PC-9 (cell line): ENCODE measurements at regions of chr12 and their contacts with region 1.

Region 1: DNA sequence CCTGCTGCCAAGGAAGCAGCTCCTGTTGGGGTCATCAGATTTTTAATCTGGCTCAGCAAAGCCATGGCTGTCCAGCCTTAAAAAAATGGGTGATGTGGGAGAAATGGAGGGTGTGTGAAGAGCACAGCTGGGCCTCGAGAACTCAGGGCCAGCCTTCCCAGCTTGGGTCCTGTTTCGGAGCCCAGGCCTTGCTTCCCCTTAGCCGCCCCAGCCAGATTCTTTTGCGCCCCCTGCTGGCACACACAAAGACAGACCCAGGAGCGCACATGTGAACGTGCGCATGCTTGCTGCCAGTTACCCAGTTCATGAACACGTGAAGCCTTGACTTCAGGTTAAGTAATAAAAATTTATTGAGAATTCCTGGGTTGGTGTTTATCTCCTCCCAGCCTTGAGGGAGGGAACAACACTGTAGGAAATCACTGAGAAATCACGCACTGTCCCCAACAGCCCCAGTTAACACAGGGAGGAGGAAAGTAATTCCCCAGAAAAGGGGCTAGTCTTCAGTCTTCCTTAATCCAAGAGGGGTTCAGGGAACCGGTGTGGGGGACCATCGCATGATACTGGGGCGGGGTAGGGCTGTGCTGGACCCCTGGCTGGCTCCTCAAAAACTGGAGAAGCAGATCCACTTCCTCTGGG is 5.3 kb downstream of the PHB2 start:
- DNase-seq: peak; percentile 88
- H3K4me3 ChIP-seq: peak overlapping the region; percentile 98
- H3K27ac ChIP-seq: peak overlapping the region; percentile 93
- H3K4me1 ChIP-seq: peaks cover 52% of the 10 kb centered on the region
- H3K27me3 ChIP-seq: no peaks in the 10 kb centered on the region
- CTCF ChIP-seq: peak; percentile 99

Region 2: DNA sequence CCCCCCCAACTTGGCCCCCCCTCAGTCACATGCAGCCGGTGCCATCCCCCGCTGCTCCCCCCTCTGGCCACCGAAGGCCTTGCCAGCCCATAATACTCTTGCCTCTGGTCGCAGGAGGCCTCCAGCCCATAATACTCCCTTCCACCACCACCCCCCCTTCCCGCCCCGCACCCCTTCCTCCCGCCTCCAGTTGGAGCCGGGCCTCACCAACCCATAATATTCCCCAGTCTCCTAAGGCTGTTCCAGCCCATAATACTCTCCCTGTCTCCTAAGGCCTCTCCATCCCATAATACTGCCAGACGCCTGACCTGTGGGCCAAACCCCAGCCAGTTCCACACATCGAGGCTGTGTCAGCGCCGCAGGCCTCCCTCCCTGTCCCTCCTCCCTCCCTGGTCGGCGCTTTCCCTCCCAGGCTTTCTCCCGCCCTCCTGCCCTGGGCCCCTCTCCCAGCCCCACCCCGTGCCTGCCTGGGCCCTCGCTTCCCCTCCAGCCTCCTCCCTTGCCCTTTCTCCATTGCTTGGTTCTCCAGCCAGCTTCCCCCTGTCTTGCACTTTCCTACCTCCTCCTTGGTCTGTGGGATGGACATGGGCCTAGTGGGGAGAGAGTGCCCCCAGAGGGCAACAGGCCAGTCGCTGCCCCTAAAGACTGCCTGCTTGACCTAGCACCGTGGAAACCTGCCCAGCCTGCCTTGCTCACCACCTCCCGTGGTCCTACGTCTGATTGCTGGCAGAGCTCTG is 351.2 kb before region 1 on chr12:
- CTCF ChIA-PET with region 1: no interaction called
- POLR2A ChIA-PET with region 1: no interaction called
- intact Hi-C with region 1: loop called (anchors 10 kb)
- DNase-seq: peak; percentile 91 to 97
- H3K4me3 ChIP-seq: peak overlapping the region; percentile 8; the same call in 1 of the 2 replicates
- H3K27ac ChIP-seq: peak overlapping the region; percentile 51
- H3K4me1 ChIP-seq: peaks cover 34% of the 10 kb centered on the region
- H3K27me3 ChIP-seq: no peaks in the 10 kb centered on the region
- CTCF ChIP-seq: no peak

Region 3: DNA sequence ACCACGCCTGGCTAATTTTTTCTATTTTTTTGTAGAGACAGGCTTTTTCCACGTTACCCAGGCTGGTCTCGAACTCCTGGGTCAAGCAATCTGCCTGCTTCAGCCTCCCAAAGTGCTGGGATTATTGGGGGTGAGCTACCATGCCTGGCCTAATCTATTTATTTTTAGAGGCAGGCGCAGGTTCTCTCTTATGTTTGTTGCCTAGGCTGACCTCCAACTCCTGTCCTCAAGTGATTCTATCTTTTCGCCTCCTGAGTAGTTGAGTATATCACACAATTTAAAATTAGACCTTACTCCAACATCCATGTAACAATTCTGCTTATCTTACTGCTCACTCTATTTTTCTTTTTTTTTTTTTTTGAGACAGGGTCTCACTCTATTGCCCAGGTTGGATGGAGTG is 311.2 kb before region 1 on chr12:
- CTCF ChIA-PET with region 1: no interaction called
- POLR2A ChIA-PET with region 1: no interaction called
- intact Hi-C with region 1: no loop called
- DNase-seq: no peak
- H3K4me3 ChIP-seq: no peak overlapping the region
- H3K27ac ChIP-seq: no peak overlapping the region
- H3K4me1 ChIP-seq: no peaks in the 10 kb centered on the region
- H3K27me3 ChIP-seq: no peaks in the 10 kb centered on the region
- CTCF ChIP-seq: no peak

Region 4: GRCh38 chr12:6851921-6852650 is 113.1 kb before region 1 on chr12 and contains the start of gene USP5:
- CTCF ChIA-PET with region 1: no interaction called
- POLR2A ChIA-PET with region 1: no interaction called
- intact Hi-C with region 1: loop called (anchors 5 kb)
- DNase-seq: peak; percentile 99 to 100
- H3K4me3 ChIP-seq: peak within 1 kb of the TSS; percentile 83
- H3K27ac ChIP-seq: peak within 1 kb of the TSS; percentile 69
- H3K4me1 ChIP-seq: peaks cover 25% of the 10 kb centered on the region
- H3K27me3 ChIP-seq: no peaks in the 10 kb centered on the region
- CTCF ChIP-seq: no peak
- total RNA-seq, gene USP5: 267 and 308 TPM in 2 replicates

Region 5: GRCh38 chr12:6904280-6905278 is 60.6 kb before region 1 on chr12 and contains the start of gene LRRC23:
- CTCF ChIA-PET with region 1: interaction called, 10 read pairs
- POLR2A ChIA-PET with region 1: interaction called, 9 read pairs
- intact Hi-C with region 1: no loop called
- DNase-seq: peak; percentile 93 to 98
- H3K4me3 ChIP-seq: peak within 1 kb of the TSS; percentile 86
- H3K27ac ChIP-seq: 0 out of 2 replicates have a peak within 1 kb of the TSS, but pooled peaks have one; percentile 1
- H3K4me1 ChIP-seq: peaks cover 22% of the 10 kb centered on the region
- H3K27me3 ChIP-seq: no peaks in the 10 kb centered on the region
- CTCF ChIP-seq: no peak
- total RNA-seq, gene LRRC23: 29.3 and 38.8 TPM in 2 replicates

Region 6: GRCh38 chr12:7042842-7043241 is 77.7 kb after region 1 on chr12:
- CTCF ChIA-PET with region 1: no interaction called
- POLR2A ChIA-PET with region 1: no interaction called
- intact Hi-C with region 1: loop called (anchors 2 kb)
- DNase-seq: peak in 1 of 2 experiments; percentile 48
- H3K4me3 ChIP-seq: no peak overlapping the region
- H3K27ac ChIP-seq: no peak overlapping the region
- H3K4me1 ChIP-seq: no peaks in the 10 kb centered on the region
- H3K27me3 ChIP-seq: no peaks in the 10 kb centered on the region
- CTCF ChIP-seq: peak; percentile 67

Region 7: GRCh38 chr12:7188562-7189397 is 223.6 kb after region 1 on chr12:
- CTCF ChIA-PET with region 1: interaction called, 8 read pairs
- POLR2A ChIA-PET with region 1: no interaction called
- intact Hi-C with region 1: loop called (anchors 2 kb)
- DNase-seq: peak; percentile 64 to 86
- H3K4me3 ChIP-seq: peak overlapping the region; percentile 73
- H3K27ac ChIP-seq: peak overlapping the region; percentile 48
- H3K4me1 ChIP-seq: peaks cover 23% of the 10 kb centered on the region
- H3K27me3 ChIP-seq: no peaks in the 10 kb centered on the region; the same call in 1 of the 2 replicates
- CTCF ChIP-seq: peak; percentile 81